ENCODE measurements at regions of chr12 and their contacts with region 1.

Region 1: GRCh38 chr12:56724972-56725722 is at the start of gene NACA:
- DNase-seq: peak; percentile 98
- CTCF ChIP-seq: no peak

Region 2: DNA sequence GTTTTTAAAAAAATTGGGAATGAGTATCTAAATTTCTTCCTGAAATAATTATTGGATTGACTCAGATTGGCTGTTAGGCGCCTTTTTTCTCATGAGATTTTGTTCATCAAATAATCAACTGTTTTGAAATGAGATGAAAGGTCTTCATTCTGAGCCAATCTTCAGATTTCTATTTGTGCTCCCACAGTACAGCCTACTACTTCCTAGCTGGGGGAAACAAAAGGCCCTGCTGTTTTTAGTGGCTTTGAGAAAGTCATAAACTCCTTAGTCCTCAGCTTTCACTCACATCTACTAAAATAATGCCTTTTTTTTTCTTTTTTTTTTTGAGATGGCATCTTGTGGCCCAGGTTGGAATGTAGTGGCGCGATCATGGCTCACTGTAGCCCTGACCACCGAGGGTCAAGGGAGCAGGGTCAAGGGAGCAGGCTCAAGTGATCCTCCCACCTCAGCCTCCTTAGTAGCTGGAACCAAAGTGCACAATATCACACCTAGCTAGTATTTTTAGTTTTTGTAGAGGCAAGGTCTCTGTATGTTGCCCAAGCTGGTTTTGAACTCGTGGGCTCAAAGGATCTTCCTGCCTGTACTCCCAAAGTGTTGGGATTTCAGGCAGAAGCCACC is 15.3 kb before region 1 on chr12:
- CTCF ChIA-PET with region 1: interaction called, 3 read pairs
- POLR2A ChIA-PET with region 1: interaction called, 13 read pairs
- DNase-seq: no peak
- CTCF ChIP-seq: no peak

Measured in GM10248 (cell line).